Activated B cell treated with CpG ODN at 0.5 μM for 24 hours (primary cell): ENCODE measurements at regions of chr11 and their contacts with region 1.

Region 1: DNA sequence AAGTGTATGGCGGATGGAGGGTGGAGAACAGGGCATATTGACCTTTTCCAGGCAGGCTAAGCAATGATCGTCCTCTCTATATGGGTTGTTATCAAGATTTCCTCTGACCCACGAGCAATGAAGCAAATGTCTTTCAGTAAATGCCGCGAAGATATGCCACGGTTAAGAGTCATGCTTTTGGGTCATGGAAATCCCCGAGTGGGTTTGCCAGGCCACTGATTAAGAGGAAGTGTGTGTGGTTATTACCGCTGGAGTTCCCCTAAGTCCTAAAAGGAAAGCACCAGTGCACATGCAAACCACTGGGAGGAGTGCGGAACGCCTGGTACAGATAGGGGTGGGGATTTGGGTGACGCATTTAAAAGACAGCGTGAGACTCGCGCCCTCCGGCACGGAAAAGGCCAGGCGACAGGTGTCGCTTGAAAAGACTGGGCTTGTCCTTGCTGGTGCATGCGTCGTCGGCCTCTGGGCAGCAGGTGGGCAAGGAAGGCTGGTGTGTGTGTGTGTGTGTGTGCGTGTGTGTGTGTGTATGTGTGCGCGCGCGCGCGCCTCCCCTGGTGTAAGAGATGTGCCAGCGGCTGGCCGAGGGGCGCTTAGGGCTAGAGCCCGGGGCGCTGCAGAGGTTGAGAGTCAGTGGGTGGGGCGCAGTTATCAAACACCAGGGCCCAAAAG is at the start of gene BIRC3:
- DNase-seq: peak; percentile 82
- ATAC-seq: peak; percentile 84
- H3K4me3 Mint-ChIP-seq: peak within 1 kb of the TSS; percentile 98
- H3K27ac Mint-ChIP-seq: peak within 1 kb of the TSS; percentile 98
- H3K4me1 Mint-ChIP-seq: peaks cover 77% of the 10 kb centered on the region
- H3K27me3 Mint-ChIP-seq: no peaks in the 10 kb centered on the region
- CTCF ChIP-seq: no peak
- total RNA-seq, gene BIRC3: 236 and 270 TPM in 2 replicates

Region 2: GRCh38 chr11:102306048-102306585 is 11.1 kb before region 1 on chr11:
- CTCF ChIA-PET with region 1: interaction called, 17 read pairs
- POLR2A ChIA-PET with region 1: interaction called, 424 read pairs
- intact Hi-C with region 1: loop called (anchors 1 kb)
- DNase-seq: no peak
- ATAC-seq: peak; percentile 10
- H3K4me3 Mint-ChIP-seq: peak overlapping the region; percentile 13
- H3K27ac Mint-ChIP-seq: peak overlapping the region; percentile 89
- H3K4me1 Mint-ChIP-seq: peaks cover 76% of the 10 kb centered on the region
- H3K27me3 Mint-ChIP-seq: no peaks in the 10 kb centered on the region
- CTCF ChIP-seq: no peak

Region 3: GRCh38 chr11:102476812-102477211 is 159.6 kb after region 1 on chr11:
- CTCF ChIA-PET with region 1: no interaction called
- POLR2A ChIA-PET with region 1: interaction called, 4 read pairs
- intact Hi-C with region 1: loop called (anchors 1 kb)
- DNase-seq: no peak
- ATAC-seq: no peak
- H3K4me3 Mint-ChIP-seq: peak overlapping the region; percentile 17
- H3K27ac Mint-ChIP-seq: peak overlapping the region; percentile 65
- H3K4me1 Mint-ChIP-seq: peaks cover 47% of the 10 kb centered on the region
- H3K27me3 Mint-ChIP-seq: no peaks in the 10 kb centered on the region
- CTCF ChIP-seq: no peak

Region 4: GRCh38 chr11:102727890-102728289 is 410.7 kb after region 1 on chr11:
- CTCF ChIA-PET with region 1: no interaction called
- POLR2A ChIA-PET with region 1: no interaction called
- intact Hi-C with region 1: no loop called
- DNase-seq: no peak
- ATAC-seq: no peak
- H3K4me3 Mint-ChIP-seq: no peak overlapping the region
- H3K27ac Mint-ChIP-seq: no peak overlapping the region
- H3K4me1 Mint-ChIP-seq: no peaks in the 10 kb centered on the region
- H3K27me3 Mint-ChIP-seq: peaks cover 2% of the 10 kb centered on the region
- CTCF ChIP-seq: no peak